AG04450 (cell line): ENCODE measurements at regions of chr9 and their contacts with region 1.

Region 1: DNA sequence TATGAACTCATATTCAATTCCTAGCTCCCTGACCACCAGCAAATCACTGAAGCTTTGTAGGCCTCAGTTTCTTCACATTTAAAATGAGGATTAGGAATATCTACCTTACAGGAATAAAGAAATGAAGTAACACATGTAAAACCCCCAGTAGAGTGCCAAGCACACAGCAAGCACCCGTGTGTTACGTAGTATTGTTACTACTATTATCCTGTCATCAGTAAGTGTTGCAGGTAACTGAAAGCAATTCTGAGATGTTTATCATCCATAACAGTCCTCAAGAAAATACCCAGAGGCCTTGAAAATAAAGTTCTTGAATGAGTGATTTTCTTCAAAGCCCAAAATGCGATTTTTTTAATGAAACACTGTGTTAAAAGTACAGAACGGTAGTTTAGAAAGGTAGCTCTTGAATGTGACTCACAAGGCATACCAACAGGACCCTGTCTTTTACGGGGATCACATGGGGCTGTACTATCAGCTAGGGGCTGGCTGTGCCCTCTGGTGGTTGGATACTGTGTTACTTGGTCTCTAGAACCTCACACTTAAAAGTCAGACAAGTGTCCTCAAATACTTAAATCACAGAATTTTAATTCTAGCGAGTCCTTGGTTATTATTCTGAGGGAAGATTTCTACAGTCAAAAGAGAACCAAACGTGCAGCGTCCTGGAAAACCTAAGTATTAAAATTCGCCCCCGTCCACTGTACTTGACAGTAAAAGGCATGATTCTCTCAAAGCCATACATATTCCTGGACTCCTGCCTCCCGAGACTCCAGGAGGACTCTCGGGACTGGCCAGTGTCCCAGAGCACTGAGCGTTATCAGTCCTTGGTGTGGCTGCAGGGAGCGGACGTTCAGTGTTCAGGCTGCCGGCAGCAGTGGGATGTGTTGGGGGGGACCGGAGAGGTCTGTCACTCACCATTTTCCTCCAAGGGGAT is 725 bp downstream of the NDUFB6 start:
- DNase-seq: no peak
- H3K4me3 ChIP-seq: peak overlapping the region; percentile 96
- H3K27ac ChIP-seq: peak overlapping the region; percentile 62
- H3K27me3 ChIP-seq: no peaks in the 10 kb centered on the region
- CTCF ChIP-seq: peak; percentile 80

Region 2: GRCh38 chr9:32558408-32558934 is 13.8 kb before region 1 on chr9:
- CTCF ChIA-PET with region 1: interaction called, 15 read pairs
- POLR2A ChIA-PET with region 1: no interaction called
- DNase-seq: no peak
- H3K4me3 ChIP-seq: no peak overlapping the region
- H3K27ac ChIP-seq: no peak overlapping the region
- H3K27me3 ChIP-seq: no peaks in the 10 kb centered on the region
- CTCF ChIP-seq: no peak

Region 3: GRCh38 chr9:32603914-32604741 is 31.9 kb after region 1 on chr9:
- CTCF ChIA-PET with region 1: no interaction called
- POLR2A ChIA-PET with region 1: no interaction called
- DNase-seq: no peak
- H3K4me3 ChIP-seq: no peak overlapping the region
- H3K27ac ChIP-seq: no peak overlapping the region
- H3K27me3 ChIP-seq: peaks cover 6% of the 10 kb centered on the region
- CTCF ChIP-seq: no peak